ENCODE measurements at regions of chr14 and their contacts with region 1.

Region 1: GRCh38 chr14:71753126-71753830 is 179.0 kb upstream of the RGS6 start:
- DNase-seq: peak; percentile 63 to 78
- H3K4me3 ChIP-seq: peak overlapping the region; percentile 29; the same call in 1 of the 2 replicates
- H3K27ac ChIP-seq: no peak overlapping the region
- H3K4me1 ChIP-seq: 0 out of 2 replicates have a peak, but pooled peaks cover 5% of the 10 kb centered on the region
- H3K27me3 ChIP-seq: no peaks in the 10 kb centered on the region
- CTCF ChIP-seq: peak; percentile 93

Region 2: GRCh38 chr14:71103662-71104484 is 649.4 kb before region 1 on chr14:
- CTCF ChIA-PET with region 1: interaction called, 9 read pairs
- POLR2A ChIA-PET with region 1: no interaction called
- intact Hi-C with region 1: loop called (anchors 1 kb)
- DNase-seq: peak in 1 of 2 experiments; percentile 63
- H3K4me3 ChIP-seq: no peak overlapping the region
- H3K27ac ChIP-seq: no peak overlapping the region
- H3K4me1 ChIP-seq: no peaks in the 10 kb centered on the region
- H3K27me3 ChIP-seq: no peaks in the 10 kb centered on the region
- CTCF ChIP-seq: peak; percentile 97

Region 3: DNA sequence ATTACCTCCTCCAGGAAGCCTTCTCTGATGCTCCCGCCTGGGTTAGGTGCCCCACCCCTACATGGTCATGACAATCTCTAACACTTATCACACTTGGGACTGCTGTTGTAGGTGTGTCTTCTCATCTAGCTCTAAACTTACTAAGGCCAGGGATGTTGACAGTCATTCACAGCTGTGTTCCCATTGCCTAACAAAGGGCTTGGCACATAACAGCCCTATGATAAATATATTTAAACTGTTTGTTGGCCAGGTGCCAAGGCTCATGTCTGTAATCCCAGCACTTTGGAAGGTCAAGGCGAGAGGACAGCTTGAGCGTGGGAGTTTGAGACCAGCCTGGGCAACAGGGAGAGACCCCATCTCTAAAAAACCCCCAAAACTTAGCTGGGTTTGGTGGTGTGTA is 80.2 kb after region 1 on chr14:
- CTCF ChIA-PET with region 1: no interaction called
- POLR2A ChIA-PET with region 1: no interaction called
- intact Hi-C with region 1: no loop called
- DNase-seq: no peak
- H3K4me3 ChIP-seq: no peak overlapping the region
- H3K27ac ChIP-seq: no peak overlapping the region
- H3K4me1 ChIP-seq: no peaks in the 10 kb centered on the region
- H3K27me3 ChIP-seq: no peaks in the 10 kb centered on the region
- CTCF ChIP-seq: no peak

Region 4: GRCh38 chr14:71855399-71856036 is 102.2 kb after region 1 on chr14:
- CTCF ChIA-PET with region 1: no interaction called
- POLR2A ChIA-PET with region 1: no interaction called
- intact Hi-C with region 1: loop called (anchors 1 kb)
- DNase-seq: peak in 1 of 2 experiments; percentile 58
- H3K4me3 ChIP-seq: no peak overlapping the region
- H3K27ac ChIP-seq: no peak overlapping the region
- H3K4me1 ChIP-seq: no peaks in the 10 kb centered on the region
- H3K27me3 ChIP-seq: no peaks in the 10 kb centered on the region
- CTCF ChIP-seq: peak; percentile 73